ENCODE measurements at regions of chr1 and their contacts with region 1.

Region 1: GRCh38 chr1:119453021-119453420 is 38.1 kb downstream of the HSD3B2 start:
- DNase-seq: no peak
- ATAC-seq: no peak
- H3K4me3 ChIP-seq: no peak overlapping the region
- H3K27ac ChIP-seq: no peak overlapping the region
- H3K4me1 ChIP-seq: no peaks in the 10 kb centered on the region
- H3K27me3 ChIP-seq: no peaks in the 10 kb centered on the region; a peak in 3 of 5 replicates
- CTCF ChIP-seq: no peak
- EP300 ChIP-seq: no peak
- POLR2A ChIP-seq: no peak
- RAD21 ChIP-seq: no peak

Region 2: DNA sequence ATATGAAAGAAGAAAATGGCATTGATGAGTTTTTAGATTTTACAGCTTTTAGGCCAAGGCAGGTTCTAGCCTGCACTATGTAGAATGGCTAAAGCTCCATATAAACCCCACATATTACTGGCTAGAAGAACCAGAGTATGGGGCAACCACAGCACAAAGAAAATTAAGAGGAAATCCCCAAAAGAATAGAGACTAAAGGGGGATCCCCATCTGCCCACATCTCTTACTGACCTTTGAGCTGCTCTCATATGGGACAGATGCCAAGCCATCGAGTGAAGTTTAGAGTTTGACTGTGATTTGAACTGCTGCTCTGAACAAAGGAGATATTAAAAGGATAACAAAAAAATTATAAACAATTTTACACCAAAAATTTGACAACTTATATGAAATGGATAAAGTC is 186.6 kb before region 1 on chr1:
- CTCF ChIA-PET with region 1: no interaction called
- POLR2A ChIA-PET with region 1: no interaction called
- in situ Hi-C with region 1: no loop called
- intact Hi-C with region 1: no loop called
- DNase-seq: no peak
- ATAC-seq: no peak
- H3K4me3 ChIP-seq: no peak overlapping the region
- H3K27ac ChIP-seq: no peak overlapping the region
- H3K4me1 ChIP-seq: no peaks in the 10 kb centered on the region
- H3K27me3 ChIP-seq: no peaks in the 10 kb centered on the region
- CTCF ChIP-seq: no peak
- EP300 ChIP-seq: no peak
- POLR2A ChIP-seq: no peak
- RAD21 ChIP-seq: no peak

Region 3: DNA sequence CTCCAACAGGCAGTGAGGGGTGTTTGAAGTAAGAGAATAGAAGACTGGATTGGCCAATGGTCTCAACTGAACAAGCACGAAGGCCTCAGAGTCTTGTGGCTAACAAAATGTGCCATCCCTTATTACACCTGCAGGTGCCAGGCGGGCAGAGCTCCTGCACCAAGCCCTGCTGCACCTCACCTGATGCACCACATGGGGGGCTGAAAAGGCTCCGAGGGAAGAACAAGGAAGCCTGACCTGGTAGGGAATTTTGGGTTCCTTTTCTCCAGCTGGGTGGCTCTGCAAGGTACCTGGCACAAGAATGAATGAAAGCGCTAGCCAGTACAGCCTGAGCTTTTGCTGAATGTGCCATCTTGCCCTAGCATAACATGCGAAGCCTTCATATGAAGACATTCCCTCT is 63.7 kb after region 1 on chr1:
- CTCF ChIA-PET with region 1: no interaction called
- POLR2A ChIA-PET with region 1: interaction called, 3 read pairs
- in situ Hi-C with region 1: no loop called
- intact Hi-C with region 1: loop called (anchors 10 kb)
- DNase-seq: no peak
- ATAC-seq: no peak
- H3K4me3 ChIP-seq: no peak overlapping the region
- H3K27ac ChIP-seq: no peak overlapping the region
- H3K4me1 ChIP-seq: no peaks in the 10 kb centered on the region
- H3K27me3 ChIP-seq: no peaks in the 10 kb centered on the region
- CTCF ChIP-seq: no peak
- EP300 ChIP-seq: no peak
- POLR2A ChIP-seq: no peak
- RAD21 ChIP-seq: no peak

Region 4: GRCh38 chr1:119686649-119687048 is 233.6 kb after region 1 on chr1:
- CTCF ChIA-PET with region 1: no interaction called
- POLR2A ChIA-PET with region 1: no interaction called
- in situ Hi-C with region 1: no loop called
- intact Hi-C with region 1: no loop called
- DNase-seq: no peak
- ATAC-seq: no peak
- H3K4me3 ChIP-seq: no peak overlapping the region
- H3K27ac ChIP-seq: no peak overlapping the region
- H3K4me1 ChIP-seq: no peaks in the 10 kb centered on the region
- H3K27me3 ChIP-seq: peaks cover 0 to 5% of the 10 kb centered on the region in 2 experiments; a peak in 1 of 5 replicates
- CTCF ChIP-seq: no peak
- EP300 ChIP-seq: no peak
- POLR2A ChIP-seq: no peak
- RAD21 ChIP-seq: no peak